ENCODE measurements at regions of chr11 and their contacts with region 1.

Region 1: GRCh38 chr11:72683782-72684200 is 9.6 kb upstream of the PDE2A start:
- DNase-seq: peak; percentile 92
- ATAC-seq: peak; percentile 80
- H3K4me3 Mint-ChIP-seq: no peak overlapping the region
- H3K27ac Mint-ChIP-seq: no peak overlapping the region
- H3K4me1 Mint-ChIP-seq: peaks cover 9% of the 10 kb centered on the region
- H3K27me3 Mint-ChIP-seq: peaks cover 23% of the 10 kb centered on the region
- CTCF ChIP-seq: peak; percentile 96

Region 2: DNA sequence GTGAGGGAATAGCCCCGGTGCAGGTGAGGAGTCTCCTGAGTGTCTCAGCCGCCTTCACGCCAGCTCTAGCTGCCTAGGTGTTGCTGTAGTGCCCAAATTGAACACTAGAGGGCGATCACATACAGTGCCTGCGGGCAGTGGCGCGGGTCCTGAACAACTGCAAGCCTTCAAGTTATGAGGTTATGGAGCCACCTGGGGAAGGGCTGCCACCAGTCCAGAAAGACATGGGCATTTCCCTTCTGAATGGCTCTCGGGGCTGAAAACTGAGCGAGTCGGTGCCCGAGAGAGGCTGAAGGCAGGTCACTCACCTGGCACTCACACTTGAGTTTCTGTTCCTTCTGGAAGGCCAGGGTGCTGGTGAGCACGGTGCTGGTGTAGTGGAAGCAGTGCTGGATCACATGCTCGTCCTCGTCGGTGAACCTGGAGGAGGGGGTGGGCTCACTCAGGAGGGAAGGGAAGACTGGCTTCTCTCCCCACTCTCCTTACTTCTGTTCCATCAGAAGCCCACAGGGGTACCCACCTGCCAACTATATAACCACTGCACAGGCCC is 98.0 kb before region 1 on chr11:
- CTCF ChIA-PET with region 1: interaction called, 461 read pairs
- POLR2A ChIA-PET with region 1: interaction called, 4 read pairs
- DNase-seq: peak; percentile 77
- ATAC-seq: peak; percentile 50
- H3K4me3 Mint-ChIP-seq: peak overlapping the region; percentile 78
- H3K27ac Mint-ChIP-seq: no peak overlapping the region
- H3K4me1 Mint-ChIP-seq: peaks cover 21% of the 10 kb centered on the region
- H3K27me3 Mint-ChIP-seq: peaks cover 91% of the 10 kb centered on the region
- CTCF ChIP-seq: peak; percentile 97

Region 3: GRCh38 chr11:72617080-72617762 is 66.6 kb before region 1 on chr11:
- CTCF ChIA-PET with region 1: interaction called, 12 read pairs
- POLR2A ChIA-PET with region 1: no interaction called
- DNase-seq: no peak
- ATAC-seq: peak; percentile 26
- H3K4me3 Mint-ChIP-seq: no peak overlapping the region
- H3K27ac Mint-ChIP-seq: no peak overlapping the region
- H3K4me1 Mint-ChIP-seq: peaks cover 11% of the 10 kb centered on the region
- H3K27me3 Mint-ChIP-seq: peaks cover 13% of the 10 kb centered on the region
- CTCF ChIP-seq: no peak

Region 4: DNA sequence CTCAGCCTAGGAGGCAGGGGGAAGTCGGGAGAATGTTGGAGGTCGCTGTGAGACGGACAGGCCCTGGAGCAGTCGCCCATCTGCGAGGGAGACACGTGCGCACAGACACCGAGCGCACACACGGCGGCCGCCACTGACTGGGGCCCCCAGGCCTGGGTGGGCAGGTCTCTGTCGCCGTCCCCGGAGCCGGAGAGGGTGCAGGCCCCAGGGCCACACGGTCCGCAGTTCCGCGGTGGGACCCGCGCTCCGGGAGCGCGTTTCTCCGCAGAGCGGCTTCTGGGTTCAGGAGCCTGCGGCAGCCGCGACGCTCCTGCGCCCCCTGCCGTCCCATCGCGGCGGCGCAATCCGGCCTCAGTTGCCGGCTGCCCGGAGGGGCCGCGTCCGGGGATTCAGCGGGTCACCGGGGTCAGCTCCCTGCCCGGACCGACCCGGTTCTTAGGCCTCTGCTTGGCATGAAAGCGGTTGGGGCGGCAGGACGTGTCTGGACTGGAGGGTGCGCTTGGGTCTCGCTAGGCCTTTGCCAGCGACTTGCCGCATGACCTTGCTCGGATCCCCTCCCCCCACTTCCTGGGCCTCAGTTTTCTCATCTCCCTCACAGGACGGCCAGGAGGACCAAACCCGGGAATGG is 40.8 kb before region 1 on chr11:
- CTCF ChIA-PET with region 1: interaction called, 55 read pairs
- POLR2A ChIA-PET with region 1: no interaction called
- DNase-seq: peak; percentile 74
- ATAC-seq: peak; percentile 79
- H3K4me3 Mint-ChIP-seq: peak overlapping the region; percentile 59
- H3K27ac Mint-ChIP-seq: no peak overlapping the region
- H3K4me1 Mint-ChIP-seq: no peaks in the 10 kb centered on the region
- H3K27me3 Mint-ChIP-seq: peaks cover 26% of the 10 kb centered on the region
- CTCF ChIP-seq: peak; percentile 98

Region 5: DNA sequence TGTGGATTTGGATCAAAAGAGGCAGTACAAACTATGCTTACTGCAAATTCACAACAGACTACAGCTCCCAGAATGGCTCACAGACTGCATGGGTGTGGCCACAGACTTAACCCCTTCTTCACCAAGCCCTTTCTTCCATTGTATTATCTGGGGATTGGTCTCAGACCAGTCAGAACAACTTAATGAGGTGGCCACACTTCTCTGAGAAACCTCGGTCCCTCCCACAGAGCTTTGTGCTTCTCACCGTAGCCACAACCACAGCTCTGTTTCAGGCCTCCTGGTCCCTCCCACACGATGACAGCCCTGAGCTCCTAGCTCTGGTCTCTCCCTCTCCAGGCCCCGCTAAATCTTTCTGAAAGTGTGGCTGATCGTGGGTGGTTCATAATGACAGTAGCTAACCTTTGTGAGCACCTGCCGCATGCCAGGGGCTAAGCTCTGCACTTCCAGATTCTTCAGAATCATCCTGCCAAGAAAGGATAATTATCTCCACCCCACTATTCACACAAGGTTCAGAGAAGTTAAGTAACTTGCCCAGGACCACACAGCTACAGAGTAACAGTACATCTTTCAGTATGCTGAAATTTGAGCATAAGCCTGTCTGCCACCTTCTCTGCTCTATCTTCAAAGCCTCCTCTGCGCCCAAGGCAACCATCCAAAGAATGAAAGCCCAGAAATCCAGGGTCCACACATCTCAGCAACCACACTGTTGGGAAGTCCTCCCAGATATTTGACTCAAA is 15.0 kb before region 1 on chr11:
- CTCF ChIA-PET with region 1: interaction called, 52 read pairs
- POLR2A ChIA-PET with region 1: no interaction called
- DNase-seq: no peak
- ATAC-seq: no peak
- H3K4me3 Mint-ChIP-seq: no peak overlapping the region
- H3K27ac Mint-ChIP-seq: no peak overlapping the region
- H3K4me1 Mint-ChIP-seq: peaks cover 17% of the 10 kb centered on the region
- H3K27me3 Mint-ChIP-seq: peaks cover 45% of the 10 kb centered on the region
- CTCF ChIP-seq: no peak

Region 6: DNA sequence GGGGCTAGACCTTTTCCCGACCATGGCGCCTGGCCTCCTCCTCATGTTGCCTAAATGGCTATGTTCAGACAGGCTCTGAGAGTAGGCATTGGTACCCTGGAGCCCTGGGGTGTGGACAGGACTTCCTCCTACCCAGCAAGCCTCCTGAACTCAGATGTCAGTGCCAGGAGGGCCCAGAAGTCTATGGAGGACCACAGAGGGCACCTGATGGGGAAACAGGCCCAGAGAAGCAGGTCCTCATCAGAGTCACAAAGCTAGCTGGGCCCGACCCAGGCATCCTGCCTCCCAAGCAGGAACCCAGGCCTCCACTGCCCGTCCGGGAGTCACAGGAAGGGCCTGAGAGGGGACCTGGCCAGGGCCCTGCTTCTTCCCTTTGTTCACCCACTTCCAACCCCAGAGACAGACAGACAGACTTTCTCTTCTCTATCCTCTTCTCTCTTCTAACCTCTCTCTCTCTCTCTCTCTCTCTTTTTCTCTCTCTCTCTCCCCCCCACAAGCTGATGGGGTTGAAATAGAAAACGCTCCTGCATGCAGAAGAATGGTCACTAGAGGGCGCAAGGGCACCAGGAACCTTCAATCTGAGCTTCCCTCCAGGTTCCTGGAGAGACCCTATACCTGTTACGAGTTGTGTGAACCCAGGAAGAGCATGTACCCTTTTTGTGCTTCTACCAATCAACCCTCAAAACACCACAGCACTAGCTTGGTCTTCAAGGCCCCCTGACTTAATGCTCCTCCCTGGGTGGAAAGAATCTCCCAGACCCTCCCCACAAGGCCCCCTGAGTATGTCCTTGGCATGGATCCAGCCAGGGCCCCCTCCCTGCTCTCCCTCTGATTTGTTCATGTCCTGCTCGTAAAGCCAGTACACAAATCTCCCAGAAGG is 41.3 kb after region 1 on chr11:
- CTCF ChIA-PET with region 1: interaction called, 15 read pairs
- POLR2A ChIA-PET with region 1: no interaction called
- DNase-seq: peak; percentile 79
- ATAC-seq: peak; percentile 63
- H3K4me3 Mint-ChIP-seq: no peak overlapping the region
- H3K27ac Mint-ChIP-seq: peak overlapping the region; percentile 55; the same call in 1 of the 2 replicates
- H3K4me1 Mint-ChIP-seq: peaks cover 12% of the 10 kb centered on the region
- H3K27me3 Mint-ChIP-seq: no peaks in the 10 kb centered on the region
- CTCF ChIP-seq: peak; percentile 84

Measured in WTC11 (cell line).